ENCODE measurements at regions of chr12 and their contacts with region 1.

Region 1: DNA sequence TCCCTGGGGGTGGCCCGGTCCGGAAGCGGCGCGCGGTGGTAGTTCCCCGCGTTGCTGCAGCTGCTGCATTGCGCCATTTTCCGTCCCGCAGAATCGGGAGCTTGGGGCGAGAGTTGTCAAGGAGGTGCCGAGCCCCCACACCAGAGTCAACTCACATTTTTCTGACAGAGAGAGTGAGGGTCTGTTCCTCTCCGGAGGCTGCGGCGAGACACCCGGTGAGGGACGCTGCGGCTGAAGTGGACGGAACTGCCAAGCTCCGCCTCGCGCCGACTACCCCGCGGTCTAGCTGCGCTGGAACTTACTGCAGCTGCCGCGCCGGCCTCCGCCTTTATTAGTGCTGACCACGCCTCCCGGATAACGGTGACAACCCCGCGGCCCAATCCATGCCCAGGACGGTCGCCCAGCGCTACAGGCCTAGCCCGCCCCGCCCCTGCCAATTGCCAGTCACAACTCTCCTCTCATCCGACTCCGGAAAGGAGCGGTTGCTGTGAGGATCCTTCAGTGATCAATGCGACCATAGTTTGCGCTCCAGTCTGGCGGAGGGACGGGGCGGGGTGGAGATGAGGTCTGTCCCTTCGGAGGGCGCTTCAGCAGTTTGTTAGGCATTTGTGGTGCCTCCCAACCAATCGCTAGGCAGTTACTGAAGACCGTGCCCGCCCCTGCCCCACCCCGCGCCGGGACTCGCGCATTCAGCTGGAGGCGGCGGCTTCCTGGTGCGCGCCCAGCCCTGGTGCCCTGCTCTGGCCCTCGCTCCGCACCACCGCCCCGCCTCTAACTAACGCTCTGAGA is at the start of gene VAMP1:
- DNase-seq: peak; percentile 97
- ATAC-seq: peak; percentile 92
- H3K4me3 ChIP-seq: peak within 1 kb of the TSS; percentile 54 to 82 (median 75)
- H3K4me3 Mint-ChIP-seq: peak within 1 kb of the TSS; percentile 90
- H3K27ac ChIP-seq: peak within 1 kb of the TSS; percentile 75 to 82
- H3K27ac Mint-ChIP-seq: peak within 1 kb of the TSS; percentile 97
- H3K4me1 ChIP-seq: peaks cover 28 to 45% of the 10 kb centered on the region in 2 donors
- H3K4me1 Mint-ChIP-seq: peaks cover 49% of the 10 kb centered on the region
- H3K27me3 ChIP-seq: no peaks in the 10 kb centered on the region
- H3K27me3 Mint-ChIP-seq: no peaks in the 10 kb centered on the region
- CTCF ChIP-seq: no peak
- total RNA-seq, gene VAMP1: 98.9 and 108 TPM in 2 replicates

Region 2: GRCh38 chr12:6423267-6424007 is 47.1 kb before region 1 on chr12:
- CTCF ChIA-PET with region 1: interaction called, 383 read pairs
- POLR2A ChIA-PET with region 1: interaction called, 33 read pairs
- intact Hi-C with region 1: loop called (anchors 1 kb)
- DNase-seq: peak; percentile 91
- ATAC-seq: peak; percentile 34
- H3K4me3 ChIP-seq: peak overlapping the region in 1 of 5 experiments; percentile 18
- H3K4me3 Mint-ChIP-seq: peak overlapping the region; percentile 54
- H3K27ac ChIP-seq: peak overlapping the region; percentile 3 to 35
- H3K27ac Mint-ChIP-seq: peak overlapping the region; percentile 90
- H3K4me1 ChIP-seq: peaks cover 33 to 41% of the 10 kb centered on the region in 2 donors
- H3K4me1 Mint-ChIP-seq: peaks cover 39% of the 10 kb centered on the region
- H3K27me3 ChIP-seq: no peaks in the 10 kb centered on the region
- H3K27me3 Mint-ChIP-seq: peaks cover 13% of the 10 kb centered on the region
- CTCF ChIP-seq: peak; percentile 87

Region 3: GRCh38 chr12:6443361-6443983 is 27.1 kb before region 1 on chr12:
- CTCF ChIA-PET with region 1: interaction called, 115 read pairs
- POLR2A ChIA-PET with region 1: interaction called, 25 read pairs
- intact Hi-C with region 1: no loop called
- DNase-seq: peak; percentile 60
- ATAC-seq: peak; percentile 34
- H3K4me3 ChIP-seq: peak overlapping the region in 2 of 5 experiments; percentile 17 to 46
- H3K4me3 Mint-ChIP-seq: peak overlapping the region; percentile 92
- H3K27ac ChIP-seq: peak overlapping the region; percentile 62 to 78
- H3K27ac Mint-ChIP-seq: peak overlapping the region; percentile 92
- H3K4me1 ChIP-seq: peaks cover 44 to 57% of the 10 kb centered on the region in 2 donors
- H3K4me1 Mint-ChIP-seq: peaks cover 63% of the 10 kb centered on the region
- H3K27me3 ChIP-seq: no peaks in the 10 kb centered on the region
- H3K27me3 Mint-ChIP-seq: no peaks in the 10 kb centered on the region
- CTCF ChIP-seq: no peak

Region 4: DNA sequence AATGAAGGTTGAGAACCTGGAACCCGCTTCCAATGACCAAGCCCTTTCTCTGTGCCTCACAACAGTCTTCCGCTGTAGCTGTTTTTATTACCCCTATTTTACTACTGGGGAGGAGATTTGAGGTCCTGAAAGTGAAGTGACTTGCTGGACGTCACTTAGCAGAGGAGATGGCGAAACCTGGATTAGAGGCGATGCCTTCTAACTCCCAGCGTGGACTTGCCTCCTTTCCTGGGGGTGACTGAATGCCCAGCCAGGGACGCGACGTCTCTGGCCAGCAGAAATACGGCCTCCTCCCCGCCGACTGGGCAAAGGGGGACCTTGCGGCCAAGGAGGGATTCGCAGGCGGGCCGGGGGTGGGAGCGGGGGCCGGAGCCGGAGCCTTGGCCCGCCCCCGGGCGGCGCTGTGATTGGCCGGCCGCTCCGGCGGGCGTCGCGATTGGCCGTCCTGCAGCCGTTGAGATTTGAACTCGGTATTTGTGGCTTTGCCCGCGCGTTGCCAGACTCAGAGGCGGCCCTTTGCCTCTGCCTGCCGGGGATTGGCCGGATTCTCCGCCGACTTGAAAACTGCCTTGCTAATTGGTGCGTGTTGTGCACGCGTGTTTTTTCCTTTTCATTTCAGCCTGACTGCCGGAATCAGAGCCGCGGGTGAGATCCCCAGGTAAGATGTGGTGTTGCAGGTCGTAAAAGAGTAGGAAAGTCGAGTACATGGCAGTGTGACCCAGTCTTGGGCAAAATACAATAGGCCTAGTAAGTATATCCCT is 23.1 kb after region 1 on chr12 and contains the start of gene NCAPD2:
- CTCF ChIA-PET with region 1: interaction called, 7 read pairs
- POLR2A ChIA-PET with region 1: interaction called, 46 read pairs
- intact Hi-C with region 1: loop called (anchors 1 kb)
- DNase-seq: peak; percentile 97
- ATAC-seq: peak; percentile 86
- H3K4me3 ChIP-seq: peak within 1 kb of the TSS; percentile 68 to 100 (median 95)
- H3K4me3 Mint-ChIP-seq: peak within 1 kb of the TSS; percentile 98
- H3K27ac ChIP-seq: peak within 1 kb of the TSS; percentile 92 to 95
- H3K27ac Mint-ChIP-seq: peak within 1 kb of the TSS; percentile 95
- H3K4me1 ChIP-seq: peaks cover 22 to 27% of the 10 kb centered on the region in 2 donors
- H3K4me1 Mint-ChIP-seq: peaks cover 31% of the 10 kb centered on the region
- H3K27me3 ChIP-seq: no peaks in the 10 kb centered on the region
- H3K27me3 Mint-ChIP-seq: no peaks in the 10 kb centered on the region
- CTCF ChIP-seq: peak; percentile 22
- total RNA-seq, gene NCAPD2: 41.1 and 42.1 TPM in 2 replicates

Region 5: GRCh38 chr12:6520186-6520585 is 49.6 kb after region 1 on chr12:
- CTCF ChIA-PET with region 1: no interaction called
- POLR2A ChIA-PET with region 1: no interaction called
- intact Hi-C with region 1: no loop called
- DNase-seq: no peak
- ATAC-seq: no peak
- H3K4me3 ChIP-seq: no peak overlapping the region
- H3K4me3 Mint-ChIP-seq: no peak overlapping the region
- H3K27ac ChIP-seq: no peak overlapping the region
- H3K27ac Mint-ChIP-seq: no peak overlapping the region
- H3K4me1 ChIP-seq: no peaks in the 10 kb centered on the region
- H3K4me1 Mint-ChIP-seq: no peaks in the 10 kb centered on the region
- H3K27me3 ChIP-seq: no peaks in the 10 kb centered on the region
- H3K27me3 Mint-ChIP-seq: no peaks in the 10 kb centered on the region
- CTCF ChIP-seq: no peak

Region 6: GRCh38 chr12:6540181-6540877 is 69.8 kb after region 1 on chr12:
- CTCF ChIA-PET with region 1: interaction called, 48 read pairs
- POLR2A ChIA-PET with region 1: interaction called, 32 read pairs
- intact Hi-C with region 1: loop called (anchors 1 kb)
- DNase-seq: peak; percentile 54
- ATAC-seq: peak; percentile 46
- H3K4me3 ChIP-seq: peak overlapping the region in 4 of 5 experiments; percentile 6 to 50 (median 34)
- H3K4me3 Mint-ChIP-seq: peak overlapping the region; percentile 86
- H3K27ac ChIP-seq: peak overlapping the region in 1 of 2 donors; percentile 48
- H3K27ac Mint-ChIP-seq: peak overlapping the region; percentile 74
- H3K4me1 ChIP-seq: peaks cover 23 to 32% of the 10 kb centered on the region in 2 donors
- H3K4me1 Mint-ChIP-seq: peaks cover 44% of the 10 kb centered on the region
- H3K27me3 ChIP-seq: no peaks in the 10 kb centered on the region
- H3K27me3 Mint-ChIP-seq: no peaks in the 10 kb centered on the region
- CTCF ChIP-seq: no peak